ENCODE measurements at regions of chr6 and their contacts with region 1.

Region 1: DNA sequence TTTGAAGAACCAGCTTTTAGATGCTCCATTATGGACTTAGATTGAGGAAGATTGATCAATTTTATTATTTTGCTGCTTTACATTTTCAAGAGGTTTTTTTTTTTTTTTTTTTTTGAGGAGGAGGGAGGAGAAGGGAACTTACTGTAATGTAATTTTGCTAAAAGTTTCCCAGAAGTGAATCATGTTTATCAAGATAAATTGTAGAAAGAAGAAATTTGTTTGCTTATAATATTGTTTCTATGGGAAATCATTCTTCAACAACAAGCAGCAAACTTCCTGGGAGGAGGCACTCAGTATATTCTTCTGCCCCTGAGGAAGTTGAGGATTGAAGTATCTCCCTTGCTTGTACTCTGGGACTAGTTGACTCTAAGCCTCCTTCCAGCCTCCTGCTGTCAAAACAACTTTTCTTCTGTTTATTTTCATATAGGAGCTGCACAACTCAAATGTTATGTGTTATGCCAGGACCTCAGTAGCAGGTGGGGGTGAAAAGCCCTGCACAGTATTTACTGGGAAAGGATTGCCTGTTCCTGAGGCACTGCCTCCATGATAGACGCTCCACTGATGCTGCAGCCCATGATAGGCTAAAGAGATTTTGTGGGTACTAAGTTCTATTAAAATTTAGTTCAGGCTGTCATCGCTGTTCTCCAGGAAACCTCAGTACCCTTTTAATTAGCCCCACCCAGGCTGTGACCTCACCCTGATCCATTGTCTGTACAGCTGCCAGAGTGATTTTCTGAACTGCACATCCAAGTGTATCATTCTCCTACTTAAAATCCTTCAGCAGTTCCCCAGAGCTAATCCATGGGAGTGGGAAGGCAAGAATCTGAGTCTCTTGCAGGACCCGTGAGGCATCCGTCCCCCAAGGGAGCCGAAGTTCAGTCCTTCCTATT is 51.9 kb downstream of the CARMIL1 start:
- DNase-seq: no peak
- ATAC-seq: no peak
- H3K4me3 ChIP-seq: no peak overlapping the region
- H3K27ac ChIP-seq: no peak overlapping the region
- H3K4me1 ChIP-seq: peaks cover 7% of the 10 kb centered on the region
- H3K27me3 ChIP-seq: no peaks in the 10 kb centered on the region
- CTCF ChIP-seq: no peak
- EP300 ChIP-seq: no peak
- POLR2A ChIP-seq: no peak
- RAD21 ChIP-seq: no peak

Region 2: GRCh38 chr6:25312703-25313501 is 18.1 kb before region 1 on chr6:
- CTCF ChIA-PET with region 1: interaction called, 4 read pairs
- POLR2A ChIA-PET with region 1: interaction called, 11 read pairs
- RAD21 ChIA-PET with region 1: no interaction called
- SMC1A ChIA-PET with region 1: interaction called, 4 read pairs
- in situ Hi-C with region 1: no loop called
- intact Hi-C with region 1: no loop called
- DNase-seq: no peak
- ATAC-seq: peak; percentile 45; the same call in 2 of the 3 replicates
- H3K4me3 ChIP-seq: no peak overlapping the region
- H3K27ac ChIP-seq: no peak overlapping the region
- H3K4me1 ChIP-seq: no peaks in the 10 kb centered on the region
- H3K27me3 ChIP-seq: no peaks in the 10 kb centered on the region
- CTCF ChIP-seq: no peak
- EP300 ChIP-seq: no peak
- POLR2A ChIP-seq: no peak
- RAD21 ChIP-seq: no peak

Measured in GM12878 (cell line).